ENCODE measurements at regions of chr2 and their contacts with region 1.

Region 1: GRCh38 chr2:119264781-119265692 is 41.4 kb downstream of the STEAP3 start:
- DNase-seq: peak; percentile 64 to 77
- H3K4me3 ChIP-seq: no peak overlapping the region
- H3K4me3 Mint-ChIP-seq: no peak overlapping the region
- H3K27ac Mint-ChIP-seq: no peak overlapping the region
- H3K4me1 ChIP-seq: no peaks in the 10 kb centered on the region
- H3K4me1 Mint-ChIP-seq: peaks cover 9% of the 10 kb centered on the region
- H3K27me3 ChIP-seq: no peaks in the 10 kb centered on the region
- H3K27me3 Mint-ChIP-seq: no peaks in the 10 kb centered on the region
- CTCF ChIP-seq: peak; percentile 92 to 93

Region 2: DNA sequence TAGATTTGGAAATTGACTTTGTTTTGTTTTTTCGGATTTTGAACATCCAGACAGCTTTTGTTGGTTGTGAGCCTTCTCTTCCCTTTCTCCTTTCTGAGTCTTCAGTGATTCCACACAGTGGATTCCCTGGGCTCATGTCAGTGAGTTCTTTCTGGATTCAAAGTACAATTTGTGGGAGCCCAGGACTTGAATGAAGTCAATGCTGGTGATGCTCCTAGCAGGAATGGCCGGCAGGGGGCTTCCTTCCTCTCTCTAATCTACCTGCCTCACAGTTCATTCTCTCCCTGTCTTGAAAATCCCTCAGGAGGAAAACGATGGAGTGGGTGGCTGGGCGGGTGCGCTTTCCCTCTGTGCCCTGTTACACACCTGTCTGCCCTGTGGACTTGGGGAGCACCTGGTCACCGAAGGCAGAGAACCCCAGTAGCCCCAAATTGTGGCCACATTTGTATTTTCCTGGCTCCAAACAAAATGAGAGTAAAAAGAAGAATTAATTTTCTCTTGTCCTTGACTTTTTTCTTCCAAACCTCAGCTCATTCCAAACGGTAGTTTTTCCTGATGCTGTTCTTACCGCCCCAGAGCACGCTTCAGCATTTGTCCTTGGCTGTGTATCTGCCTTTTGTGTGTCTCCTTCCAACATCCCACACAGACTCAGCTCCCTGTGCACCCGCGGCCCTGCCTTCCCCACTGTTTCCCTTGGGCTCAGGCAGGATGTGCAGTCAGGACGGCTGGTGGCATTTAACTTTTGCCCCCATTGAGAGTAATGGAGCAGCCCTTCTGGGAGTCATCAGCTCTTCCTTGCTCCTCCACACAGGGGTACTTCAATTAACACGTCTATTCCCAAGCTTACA is 236.5 kb before region 1 on chr2:
- CTCF ChIA-PET with region 1: no interaction called
- POLR2A ChIA-PET with region 1: no interaction called
- intact Hi-C with region 1: loop called (anchors 1 kb)
- DNase-seq: peak; percentile 63 to 65
- H3K4me3 ChIP-seq: no peak overlapping the region
- H3K4me3 Mint-ChIP-seq: no peak overlapping the region
- H3K27ac Mint-ChIP-seq: no peak overlapping the region
- H3K4me1 ChIP-seq: no peaks in the 10 kb centered on the region
- H3K4me1 Mint-ChIP-seq: no peaks in the 10 kb centered on the region
- H3K27me3 ChIP-seq: no peaks in the 10 kb centered on the region; the same call in 1 of the 2 replicates
- H3K27me3 Mint-ChIP-seq: peaks cover 17% of the 10 kb centered on the region
- CTCF ChIP-seq: peak; percentile 71 to 78

Region 3: GRCh38 chr2:119196301-119197125 is 68.5 kb before region 1 on chr2:
- CTCF ChIA-PET with region 1: no interaction called
- POLR2A ChIA-PET with region 1: no interaction called
- intact Hi-C with region 1: loop called (anchors 1 kb)
- DNase-seq: no peak
- H3K4me3 ChIP-seq: no peak overlapping the region
- H3K4me3 Mint-ChIP-seq: no peak overlapping the region
- H3K27ac Mint-ChIP-seq: no peak overlapping the region
- H3K4me1 ChIP-seq: peaks cover 34% of the 10 kb centered on the region
- H3K4me1 Mint-ChIP-seq: peaks cover 28% of the 10 kb centered on the region
- H3K27me3 ChIP-seq: no peaks in the 10 kb centered on the region
- H3K27me3 Mint-ChIP-seq: no peaks in the 10 kb centered on the region
- CTCF ChIP-seq: no peak

Region 4: GRCh38 chr2:119234377-119235019 is 30.5 kb before region 1 on chr2:
- CTCF ChIA-PET with region 1: interaction called, 4 read pairs
- POLR2A ChIA-PET with region 1: no interaction called
- intact Hi-C with region 1: loop called (anchors 1 kb)
- DNase-seq: peak; percentile 63 to 71
- H3K4me3 ChIP-seq: no peak overlapping the region
- H3K4me3 Mint-ChIP-seq: no peak overlapping the region
- H3K27ac Mint-ChIP-seq: no peak overlapping the region
- H3K4me1 ChIP-seq: peaks cover 16% of the 10 kb centered on the region
- H3K4me1 Mint-ChIP-seq: peaks cover 32% of the 10 kb centered on the region
- H3K27me3 ChIP-seq: no peaks in the 10 kb centered on the region
- H3K27me3 Mint-ChIP-seq: no peaks in the 10 kb centered on the region
- CTCF ChIP-seq: peak; percentile 25 to 49